Dorsolateral prefrontal cortex (tissue), 120 donors: ENCODE measurements at regions of chr4 and their contacts with region 1.

Region 1: DNA sequence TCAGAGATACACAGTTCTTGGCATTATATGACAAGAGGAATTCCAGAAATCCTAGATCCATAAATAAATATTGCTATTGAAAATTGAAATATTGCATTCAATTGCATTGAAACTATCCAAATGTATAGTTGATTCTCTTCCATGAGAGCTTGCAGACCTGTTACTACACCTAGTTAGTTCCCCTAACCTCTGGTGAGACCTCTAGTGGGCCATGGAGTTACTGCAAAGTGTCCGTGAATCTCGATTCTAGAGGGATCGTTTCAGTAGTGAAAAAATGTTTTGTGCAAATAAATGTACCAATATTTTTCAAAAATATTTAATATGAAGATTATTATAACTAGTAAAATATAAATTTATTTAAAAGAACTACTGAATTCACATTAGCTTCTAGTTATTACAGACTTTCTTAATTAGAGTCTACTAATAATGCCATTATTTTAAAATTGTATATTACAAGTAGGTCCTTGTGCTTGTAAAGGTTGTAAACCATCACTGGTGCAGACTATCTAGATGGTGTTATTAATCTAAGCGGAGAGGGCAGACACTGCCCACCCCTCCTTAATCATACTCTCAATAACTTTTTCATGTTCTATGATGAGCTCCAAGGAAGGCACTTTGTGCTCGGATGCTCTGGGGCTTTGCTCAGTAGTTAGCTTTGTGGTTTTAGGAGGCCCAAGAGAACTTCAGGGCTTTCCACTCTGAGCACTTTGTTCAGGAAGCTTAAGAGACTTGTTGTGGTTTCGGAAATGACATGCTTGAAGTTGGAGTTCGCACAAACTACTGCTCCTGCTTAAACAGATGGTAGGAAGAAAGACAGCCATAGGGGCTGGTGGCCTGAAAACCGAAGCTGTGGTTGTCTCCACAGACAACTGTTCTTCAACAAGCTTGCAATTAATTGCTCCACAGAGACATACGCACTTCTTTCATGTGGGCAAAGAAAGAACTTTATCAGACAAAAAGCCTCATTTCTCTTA is 42.8 kb downstream of the IL21 start:
- DNase-seq: peak in 3 of 10 donors; percentile 25 to 54 (median 50)
- H3K4me3 ChIP-seq: no peak overlapping the region
- H3K27ac ChIP-seq: peak overlapping the region in 18 of 59 donors; percentile 1 to 78 (median 33)
- H3K27me3 ChIP-seq: peaks cover 0 to 4% (median 0%) of the 10 kb centered on the region in 45 donors
- CTCF ChIP-seq: peak; percentile 25 to 80 (median 66)

Region 2: DNA sequence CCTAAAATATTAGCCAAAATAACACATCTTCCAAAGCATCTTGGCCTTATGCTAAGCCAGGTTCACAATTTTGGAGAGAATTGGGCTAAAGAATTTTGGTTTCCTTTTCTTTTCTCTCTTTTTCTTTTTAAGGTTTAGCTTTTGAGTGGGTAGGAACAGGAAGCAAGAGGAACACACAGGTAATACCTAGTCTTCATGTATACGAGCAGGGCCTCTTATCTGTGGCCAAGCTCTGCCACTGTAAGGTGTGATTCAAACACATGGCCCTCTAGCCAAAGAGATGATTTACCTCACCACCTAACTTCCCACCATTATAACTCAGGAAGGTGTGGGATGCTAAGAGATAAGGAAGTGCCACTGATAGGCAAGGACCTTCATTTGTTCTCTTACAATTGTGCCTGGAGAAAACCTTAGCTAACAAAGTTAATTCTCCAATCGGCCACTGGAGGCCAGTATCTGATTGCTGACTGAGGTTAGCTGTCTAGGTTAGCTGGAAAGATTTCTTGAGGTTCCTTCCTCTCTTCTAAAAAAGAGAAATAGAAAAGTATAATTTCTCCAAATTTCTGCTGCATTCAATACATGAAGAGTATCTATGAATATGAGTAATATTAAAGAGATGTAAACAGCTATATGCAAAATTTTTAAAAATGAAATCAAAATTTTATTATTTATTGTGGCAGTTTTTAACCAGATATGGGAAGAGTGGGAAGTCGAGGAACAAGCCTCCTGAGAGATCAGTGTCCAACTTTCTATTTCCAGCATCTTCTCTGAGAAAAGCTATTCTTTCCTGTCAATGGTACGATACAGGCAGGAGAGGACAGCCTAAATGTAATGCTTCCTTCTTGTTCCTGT is 677.7 kb before region 1 on chr4:
- intact Hi-C with region 1: loop called in 1 of 2 experiments (anchors 10 kb)
- DNase-seq: peak in 7 of 10 donors; percentile 7 to 59 (median 41)
- H3K4me3 ChIP-seq: no peak overlapping the region
- H3K27ac ChIP-seq: no peak overlapping the region
- H3K27me3 ChIP-seq: no peaks in the 10 kb centered on the region
- CTCF ChIP-seq: peak; percentile 55 to 89 (median 76)

Region 3: GRCh38 chr4:122309988-122310626 is 268.0 kb before region 1 on chr4:
- intact Hi-C with region 1: loop called in 1 of 2 experiments (anchors 5 kb)
- DNase-seq: no peak
- H3K4me3 ChIP-seq: no peak overlapping the region
- H3K27ac ChIP-seq: no peak overlapping the region
- H3K27me3 ChIP-seq: no peaks in the 10 kb centered on the region
- CTCF ChIP-seq: peak; percentile 38 to 77 (median 62)